AG04450 (cell line): ENCODE measurements at regions of chr22 and their contacts with region 1.

Region 1: GRCh38 chr22:22508274-22509176 is at the start of gene ZNF280B:
- DNase-seq: peak; percentile 46
- H3K4me3 ChIP-seq: peak within 1 kb of the TSS; percentile 84
- H3K27ac ChIP-seq: no peak within 1 kb of the TSS
- H3K27me3 ChIP-seq: peaks cover 3% of the 10 kb centered on the region
- CTCF ChIP-seq: peak; percentile 74
- polyA plus RNA-seq, gene ZNF280B: 1.6 and 2.3 TPM in 2 replicates

Region 2: GRCh38 chr22:22450343-22450839 is 58.1 kb before region 1 on chr22:
- CTCF ChIA-PET with region 1: no interaction called
- POLR2A ChIA-PET with region 1: no interaction called
- DNase-seq: no peak
- H3K4me3 ChIP-seq: no peak overlapping the region
- H3K27ac ChIP-seq: no peak overlapping the region
- H3K27me3 ChIP-seq: peaks cover 12% of the 10 kb centered on the region
- CTCF ChIP-seq: no peak

Region 3: DNA sequence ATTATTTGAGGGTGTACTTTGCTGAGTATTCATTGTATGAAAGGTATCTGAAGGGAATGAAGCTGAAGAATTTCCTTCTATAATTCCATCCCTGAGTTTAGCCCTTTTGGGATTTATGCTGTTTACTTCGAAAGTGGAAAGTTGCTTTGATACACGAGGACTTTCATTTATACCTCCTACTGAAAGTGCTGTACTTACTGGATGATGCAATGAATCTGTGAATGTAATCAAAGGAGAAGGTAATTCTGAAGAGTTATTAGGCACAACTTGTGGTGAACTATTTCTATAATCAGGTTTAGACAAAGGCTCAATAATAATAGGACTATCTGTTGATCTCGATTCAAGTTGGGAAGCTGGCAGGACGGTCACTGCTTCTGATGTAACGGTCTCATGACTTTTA is 19.8 kb before region 1 on chr22:
- CTCF ChIA-PET with region 1: interaction called, 15 read pairs
- POLR2A ChIA-PET with region 1: no interaction called
- DNase-seq: no peak
- H3K4me3 ChIP-seq: no peak overlapping the region
- H3K27ac ChIP-seq: no peak overlapping the region
- H3K27me3 ChIP-seq: no peaks in the 10 kb centered on the region
- CTCF ChIP-seq: no peak

Region 4: GRCh38 chr22:22498267-22498666 is 10.3 kb before region 1 on chr22:
- CTCF ChIA-PET with region 1: interaction called, 12 read pairs
- POLR2A ChIA-PET with region 1: no interaction called
- DNase-seq: no peak
- H3K4me3 ChIP-seq: no peak overlapping the region
- H3K27ac ChIP-seq: no peak overlapping the region
- H3K27me3 ChIP-seq: no peaks in the 10 kb centered on the region
- CTCF ChIP-seq: no peak

Region 5: DNA sequence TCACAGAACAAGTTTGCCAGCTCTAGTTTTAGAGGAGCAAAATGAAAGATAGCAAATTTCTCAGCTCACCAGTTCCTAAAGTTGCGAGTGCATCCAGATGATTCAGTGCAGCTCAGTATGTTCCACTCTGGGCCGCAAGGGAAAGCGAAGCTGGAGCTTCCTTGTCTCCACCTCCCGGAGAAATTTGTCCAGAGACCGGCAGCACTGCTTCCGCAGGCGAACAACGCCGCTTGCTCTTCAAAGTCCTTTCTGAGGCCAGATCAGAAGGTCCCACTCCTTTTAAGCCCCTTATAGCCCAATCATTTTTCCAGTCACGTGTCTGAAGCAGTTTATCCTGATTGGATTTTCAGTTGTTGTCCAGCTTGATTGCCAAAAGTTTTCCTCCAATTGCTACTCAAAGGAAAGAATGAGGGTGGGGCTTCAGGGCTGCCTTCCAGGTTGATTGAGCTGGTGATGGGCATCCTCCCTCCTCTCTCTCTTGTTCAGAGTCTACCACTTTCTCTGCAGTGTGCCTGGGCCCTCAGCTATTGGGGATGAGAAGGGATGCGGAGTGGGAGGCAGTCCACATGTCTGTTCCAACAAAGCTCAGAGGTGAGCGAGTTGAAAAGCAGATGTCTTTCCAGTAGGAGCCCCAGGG is 11.6 kb after region 1 on chr22 and contains the start of gene ZNF280A:
- CTCF ChIA-PET with region 1: interaction called, 15 read pairs
- POLR2A ChIA-PET with region 1: no interaction called
- DNase-seq: no peak
- H3K4me3 ChIP-seq: no peak within 1 kb of the TSS
- H3K27ac ChIP-seq: no peak within 1 kb of the TSS
- H3K27me3 ChIP-seq: peaks cover 4% of the 10 kb centered on the region
- CTCF ChIP-seq: no peak; the same call in 1 of the 2 replicates
- polyA plus RNA-seq, gene ZNF280A: not detected in 2 replicates